ENCODE measurements at regions of chr13 and their contacts with region 1.

Region 1: GRCh38 chr13:75694722-75695121 is 58.6 kb downstream of the LMO7 start:
- DNase-seq: no peak
- ATAC-seq: no peak
- H3K4me3 ChIP-seq: no peak overlapping the region
- H3K27ac ChIP-seq: no peak overlapping the region
- H3K4me1 ChIP-seq: peaks cover 0 to 3% (median 0%) of the 10 kb centered on the region in 12 donors
- H3K27me3 ChIP-seq: no peaks in the 10 kb centered on the region
- CTCF ChIP-seq: no peak
- POLR2A ChIP-seq: no peak

Region 2: DNA sequence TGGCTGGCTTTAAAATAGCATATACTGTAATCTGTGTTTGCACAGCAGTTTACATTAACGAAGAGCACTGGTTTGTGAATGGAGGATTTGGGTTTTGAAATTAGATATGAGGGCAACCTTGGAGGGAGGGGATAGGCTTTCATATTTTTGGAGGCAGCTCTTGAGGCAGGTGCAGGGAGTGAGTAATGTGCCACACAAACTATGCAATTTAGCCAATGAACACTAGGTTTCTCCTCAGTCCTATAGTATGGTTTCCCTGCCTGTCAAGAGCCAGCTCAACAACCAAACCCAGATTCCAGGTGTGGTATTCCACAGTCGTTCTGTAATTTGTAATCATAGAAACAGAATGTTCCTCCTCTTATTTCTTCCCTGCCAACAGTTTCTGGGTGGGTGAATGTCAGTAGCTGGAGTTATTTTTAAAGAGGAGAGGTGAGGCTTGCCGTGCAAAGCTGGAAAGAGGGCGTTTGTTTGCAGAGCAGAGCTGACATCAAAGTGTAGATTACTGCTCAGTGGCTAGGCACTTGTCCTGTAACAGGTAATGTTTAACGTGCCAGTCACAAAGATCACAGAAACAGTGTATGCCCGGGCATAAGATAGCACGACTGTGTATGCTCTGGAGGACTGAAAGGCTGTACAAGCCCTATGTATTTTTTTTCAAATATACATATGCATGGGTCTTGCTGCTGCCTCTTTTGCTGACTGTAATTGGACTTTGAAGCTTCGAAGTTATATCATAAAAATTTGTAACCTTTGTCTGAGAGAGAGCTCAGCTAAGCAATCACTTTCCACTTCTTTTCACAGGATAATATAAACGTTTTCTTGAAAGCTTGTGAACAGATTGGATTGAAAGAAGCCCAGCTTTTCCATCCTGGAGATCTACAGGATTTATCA is 65.7 kb after region 1 on chr13:
- intact Hi-C with region 1: loop called in 2 of 10 experiments (anchors 5 to 10 kb)
- DNase-seq: peak in 4 of 5 donors; percentile 14 to 37 (median 27)
- ATAC-seq: peak; percentile 75 to 89 (median 82)
- H3K4me3 ChIP-seq: peak overlapping the region; percentile 10 to 57 (median 44)
- H3K27ac ChIP-seq: peak overlapping the region; percentile 12 to 82 (median 64)
- H3K4me1 ChIP-seq: peaks cover 0 to 33% (median 11%) of the 10 kb centered on the region in 12 donors
- H3K27me3 ChIP-seq: no peaks in the 10 kb centered on the region
- CTCF ChIP-seq: peak in 6 of 12 donors; percentile 13 to 31 (median 19)
- POLR2A ChIP-seq: peak in 1 of 2 donors; percentile 40

Region 3: GRCh38 chr13:75803164-75803611 is 108.5 kb after region 1 on chr13:
- intact Hi-C with region 1: loop called in 5 of 10 experiments (anchors 5 to 10 kb)
- DNase-seq: no peak
- ATAC-seq: peak; percentile 17 to 38 (median 26)
- H3K4me3 ChIP-seq: peak overlapping the region in 2 of 12 donors; percentile 11 to 59
- H3K27ac ChIP-seq: peak overlapping the region; percentile 49 to 96 (median 83)
- H3K4me1 ChIP-seq: peaks cover 0 to 32% (median 11%) of the 10 kb centered on the region in 12 donors
- H3K27me3 ChIP-seq: no peaks in the 10 kb centered on the region
- CTCF ChIP-seq: no peak
- POLR2A ChIP-seq: no peak

Region 4: GRCh38 chr13:75812751-75813181 is 118.0 kb after region 1 on chr13:
- intact Hi-C with region 1: loop called in 5 of 10 experiments (anchors 5 to 10 kb)
- DNase-seq: no peak
- ATAC-seq: peak; percentile 30 to 66 (median 46)
- H3K4me3 ChIP-seq: peak overlapping the region in 1 of 12 donors; percentile 2
- H3K27ac ChIP-seq: peak overlapping the region in 10 of 12 donors; percentile 15 to 68 (median 36)
- H3K4me1 ChIP-seq: peaks cover 0 to 63% (median 32%) of the 10 kb centered on the region in 12 donors
- H3K27me3 ChIP-seq: no peaks in the 10 kb centered on the region
- CTCF ChIP-seq: no peak
- POLR2A ChIP-seq: no peak

Region 5: GRCh38 chr13:76903544-76904162 is 1208.9 kb after region 1 on chr13:
- intact Hi-C with region 1: loop called in 8 of 10 experiments (anchors 2 to 10 kb)
- DNase-seq: peak; percentile 47 to 67 (median 54)
- ATAC-seq: peak; percentile 64 to 83 (median 79)
- H3K4me3 ChIP-seq: no peak overlapping the region
- H3K27ac ChIP-seq: no peak overlapping the region
- H3K4me1 ChIP-seq: no peaks in the 10 kb centered on the region
- H3K27me3 ChIP-seq: peaks cover 0 to 3% (median 0%) of the 10 kb centered on the region in 9 donors
- CTCF ChIP-seq: peak; percentile 95 to 100 (median 99)
- POLR2A ChIP-seq: no peak

Measured in heart left ventricle (tissue), 16 donors.